Naive thymus-derived CD8-positive, alpha-beta T cell (primary cell): ENCODE measurements at regions of chr12 and their contacts with region 1.

Region 1: DNA sequence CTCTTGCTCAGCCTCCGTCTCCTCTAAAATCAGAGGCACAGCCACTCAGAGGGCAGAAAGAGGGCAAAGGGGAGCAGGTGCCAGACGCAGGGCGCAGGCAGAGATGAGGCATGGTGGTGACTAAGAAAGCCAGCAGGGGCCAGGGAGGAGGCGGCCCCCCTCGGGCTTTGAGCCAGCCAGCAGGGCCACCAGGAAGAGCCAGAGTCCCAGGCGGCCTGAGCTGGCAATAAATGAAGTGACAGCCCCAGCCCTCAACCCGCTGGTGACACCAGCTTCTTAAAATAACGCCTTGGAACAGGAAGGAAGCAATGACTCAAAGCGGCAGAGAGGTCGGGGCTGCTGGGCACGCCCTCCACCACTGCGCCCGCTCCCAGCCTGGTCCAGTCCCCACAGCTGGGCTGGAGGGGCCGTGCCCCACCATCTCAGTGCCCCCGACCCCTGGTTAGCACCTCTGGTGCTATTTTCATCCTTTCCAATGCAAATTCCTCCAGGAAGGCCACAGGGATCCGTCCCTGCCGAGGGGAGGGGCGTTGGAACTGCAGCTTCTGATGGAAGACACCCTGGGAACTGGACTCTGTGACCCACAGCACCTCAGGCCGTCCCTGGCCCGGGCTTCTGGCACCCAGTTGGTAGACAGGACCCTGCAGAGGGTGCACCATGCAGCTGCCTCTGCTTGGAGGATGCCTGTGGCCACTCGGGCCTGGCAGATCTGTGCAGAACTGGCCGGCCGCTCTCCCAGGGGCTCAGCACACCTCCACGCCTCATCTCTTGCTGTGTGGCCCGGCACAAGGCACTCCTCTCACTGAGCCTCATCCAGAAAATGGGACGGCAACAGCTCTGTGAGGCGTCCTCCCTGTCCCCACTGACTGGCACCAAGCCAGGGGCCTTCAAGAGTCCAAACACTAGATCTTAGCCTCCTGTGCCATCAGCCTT is 113.7 kb downstream of the NCOR2 start:
- DNase-seq: peak; percentile 47 to 86 (median 66)
- ATAC-seq: peak; percentile 80 to 81
- H3K4me3 Mint-ChIP-seq: peak overlapping the region; percentile 42 to 79 (median 68)
- H3K27ac Mint-ChIP-seq: peak overlapping the region in 9 of 10 donors; percentile 62 to 90 (median 84)
- H3K4me1 Mint-ChIP-seq: peaks cover 36 to 84% (median 76%) of the 10 kb centered on the region in 4 donors
- H3K27me3 Mint-ChIP-seq: no peaks in the 10 kb centered on the region

Region 2: DNA sequence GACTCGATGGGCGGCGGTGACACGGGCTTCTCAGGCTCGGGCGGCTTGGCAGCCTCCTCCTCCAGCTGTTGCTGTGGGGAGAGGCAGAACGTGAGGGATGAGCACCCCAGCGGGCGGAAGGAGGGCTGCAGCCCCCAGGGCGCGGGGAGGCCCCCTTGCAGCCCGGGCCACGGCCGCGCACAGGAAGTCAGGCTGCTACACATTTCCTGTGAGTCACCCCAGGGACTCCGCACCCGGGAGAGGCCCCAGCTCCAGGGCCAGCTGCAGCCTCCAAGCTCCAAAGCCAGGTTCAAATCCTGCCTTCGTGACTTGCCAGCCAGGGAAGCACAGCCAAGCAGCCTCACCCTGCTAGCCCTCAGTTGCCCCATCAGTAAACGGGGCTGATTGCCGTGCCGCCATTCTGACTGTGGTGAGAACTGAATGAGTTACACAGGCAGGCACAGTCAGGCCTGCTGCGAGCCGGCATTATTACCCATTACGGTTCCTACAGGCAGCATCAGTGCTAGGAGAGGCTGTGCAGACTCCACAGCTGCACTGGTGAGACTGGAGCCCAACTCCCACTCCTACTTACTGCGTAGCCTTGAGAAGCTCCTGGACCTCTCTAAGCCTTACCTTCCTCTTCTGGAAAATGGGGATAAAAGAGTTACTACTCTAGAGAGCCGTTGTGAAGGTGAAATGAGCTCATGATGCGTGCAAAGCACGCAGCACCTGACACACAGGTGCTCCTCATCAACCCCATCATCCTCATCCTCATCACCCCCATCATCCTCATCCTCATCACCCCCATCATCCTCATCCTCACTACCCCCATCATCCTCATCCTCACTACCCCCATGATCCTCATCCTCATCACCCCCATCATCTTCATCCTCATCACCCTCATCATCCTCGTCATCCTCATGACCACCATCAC is 12.8 kb after region 1 on chr12:
- POLR2A ChIA-PET with region 1: interaction called, 17 read pairs
- DNase-seq: peak; percentile 80 to 92 (median 86)
- ATAC-seq: peak; percentile 98 to 99
- H3K4me3 Mint-ChIP-seq: peak overlapping the region; percentile 59 to 79 (median 72)
- H3K27ac Mint-ChIP-seq: peak overlapping the region; percentile 66 to 97 (median 88)
- H3K4me1 Mint-ChIP-seq: peaks cover 17 to 53% (median 47%) of the 10 kb centered on the region in 4 donors
- H3K27me3 Mint-ChIP-seq: no peaks in the 10 kb centered on the region